CD4-positive, alpha-beta T cell (primary cell): ENCODE measurements at regions of chr5 and their contacts with region 1.

Region 1: DNA sequence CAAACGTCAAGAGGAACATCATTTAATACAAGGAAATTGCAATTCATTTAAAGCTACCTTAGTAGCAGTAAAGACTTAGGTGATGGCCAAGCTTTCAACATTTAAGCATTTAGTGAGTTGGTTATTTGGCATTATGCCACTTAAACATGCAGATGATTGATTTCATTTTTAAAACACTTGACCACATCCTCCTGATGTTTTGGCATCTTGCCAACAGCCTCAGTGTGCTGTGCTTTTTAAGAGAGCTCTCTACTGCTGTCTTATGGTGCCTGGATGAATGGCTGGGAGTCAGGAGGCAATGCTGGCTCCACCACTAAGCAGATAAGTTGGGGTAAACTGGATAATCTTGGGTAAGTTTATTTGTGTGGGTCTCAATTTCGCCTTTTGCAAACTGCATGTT is 364.5 kb downstream of the MAN2A1 start:
- DNase-seq: peak; percentile 35 to 93 (median 72)
- ATAC-seq: peak; percentile 91
- H3K4me3 ChIP-seq: no peak overlapping the region
- H3K4me3 Mint-ChIP-seq: peak overlapping the region; percentile 28
- H3K27ac ChIP-seq: peak overlapping the region in 1 of 2 donors; percentile 43
- H3K27ac Mint-ChIP-seq: peak overlapping the region; percentile 75
- H3K4me1 ChIP-seq: peaks cover 18% of the 10 kb centered on the region
- H3K4me1 Mint-ChIP-seq: peaks cover 41% of the 10 kb centered on the region
- H3K27me3 ChIP-seq: no peaks in the 10 kb centered on the region
- H3K27me3 Mint-ChIP-seq: no peaks in the 10 kb centered on the region
- CTCF ChIP-seq: peak; percentile 56

Region 2: DNA sequence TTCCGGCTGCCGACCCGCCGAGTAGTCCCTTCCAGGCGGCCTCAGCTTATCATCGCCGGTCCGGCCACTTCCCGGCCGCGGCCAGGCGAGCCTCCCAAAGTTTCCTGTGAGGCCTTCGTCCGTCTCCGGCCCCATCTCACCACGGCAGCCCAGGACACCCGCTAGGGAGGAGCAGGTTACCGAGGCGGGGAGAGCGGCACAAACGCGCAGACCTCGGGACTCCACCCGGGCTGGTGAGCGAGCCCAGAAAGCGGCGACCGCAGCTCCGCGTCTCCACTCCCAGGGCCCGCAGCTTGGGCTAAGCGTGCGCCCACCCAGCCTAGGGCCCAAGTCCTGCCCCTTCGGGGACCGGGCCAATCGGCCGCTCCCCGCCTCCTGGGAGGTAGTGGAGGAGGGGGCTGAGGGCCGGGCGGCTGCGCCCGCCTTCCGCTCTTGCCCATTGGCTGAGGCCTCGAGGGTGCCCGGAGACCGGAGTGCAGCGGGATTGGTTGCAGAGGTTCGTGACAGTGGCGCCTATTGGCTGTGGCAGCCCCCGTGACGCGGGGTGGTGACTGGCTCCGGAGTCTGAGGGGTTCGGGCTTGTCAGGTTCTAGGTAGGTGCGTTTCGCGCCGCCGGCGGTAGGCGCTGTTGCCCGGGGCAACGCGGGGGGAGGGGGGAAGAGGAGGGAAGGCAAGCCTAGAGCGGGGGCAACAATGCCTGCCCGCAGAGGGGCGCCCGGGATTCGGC is 1305.7 kb before region 1 on chr5:
- CTCF ChIA-PET with region 1: no interaction called
- POLR2A ChIA-PET with region 1: no interaction called
- intact Hi-C with region 1: loop called in 1 of 2 experiments (anchors 10 kb)
- DNase-seq: peak; percentile 92 to 99 (median 96)
- ATAC-seq: peak; percentile 91
- H3K4me3 ChIP-seq: peak overlapping the region; percentile 98
- H3K4me3 Mint-ChIP-seq: peak overlapping the region; percentile 96
- H3K27ac ChIP-seq: peak overlapping the region; percentile 91 to 92
- H3K27ac Mint-ChIP-seq: peak overlapping the region; percentile 91
- H3K4me1 ChIP-seq: peaks cover 18% of the 10 kb centered on the region
- H3K4me1 Mint-ChIP-seq: peaks cover 21% of the 10 kb centered on the region
- H3K27me3 ChIP-seq: peaks cover 0 to 5% of the 10 kb centered on the region in 2 experiments
- H3K27me3 Mint-ChIP-seq: peaks cover 4% of the 10 kb centered on the region
- CTCF ChIP-seq: no peak

Region 3: GRCh38 chr5:109852371-109853155 is 201.7 kb before region 1 on chr5:
- CTCF ChIA-PET with region 1: interaction called, 3 read pairs
- POLR2A ChIA-PET with region 1: no interaction called
- intact Hi-C with region 1: loop called in 1 of 2 experiments (anchors 5 kb)
- DNase-seq: peak in 2 of 14 experiments; percentile 27 to 38
- ATAC-seq: no peak
- H3K4me3 ChIP-seq: no peak overlapping the region
- H3K4me3 Mint-ChIP-seq: peak overlapping the region; percentile 39
- H3K27ac ChIP-seq: no peak overlapping the region
- H3K27ac Mint-ChIP-seq: peak overlapping the region; percentile 73
- H3K4me1 ChIP-seq: peaks cover 40% of the 10 kb centered on the region
- H3K4me1 Mint-ChIP-seq: peaks cover 82% of the 10 kb centered on the region
- H3K27me3 ChIP-seq: no peaks in the 10 kb centered on the region
- H3K27me3 Mint-ChIP-seq: no peaks in the 10 kb centered on the region
- CTCF ChIP-seq: no peak

Region 4: DNA sequence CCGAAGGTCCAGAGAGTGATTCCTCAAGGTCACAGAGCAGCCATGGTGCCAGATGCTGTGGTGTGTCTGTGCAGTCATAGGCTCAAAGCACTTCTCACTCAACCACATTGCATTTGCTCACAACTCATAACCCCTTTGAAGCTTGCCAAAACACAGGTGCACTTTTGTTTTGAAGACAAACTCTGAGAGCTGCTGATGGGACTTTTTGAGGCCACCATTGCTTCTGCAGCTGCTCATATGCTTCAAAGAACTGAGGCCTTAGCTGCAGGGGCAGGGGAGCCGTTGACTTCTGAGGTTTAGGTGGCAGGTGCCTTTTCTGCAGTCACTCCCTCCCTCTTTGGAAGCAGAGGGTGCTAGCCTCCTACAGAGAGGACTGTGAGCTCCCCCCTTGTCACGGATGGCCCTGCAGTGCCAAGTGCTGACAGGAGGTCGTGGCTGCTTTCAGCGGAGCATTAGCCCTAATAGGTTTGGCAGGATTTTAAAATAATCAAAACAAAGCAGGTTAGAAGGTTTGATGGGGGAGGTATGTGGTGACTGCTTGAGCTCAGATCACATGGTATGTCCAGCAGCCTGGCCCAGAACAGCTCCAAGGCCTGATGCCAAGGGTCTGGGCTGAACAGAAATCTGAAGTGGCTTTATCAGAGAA is 132.4 kb before region 1 on chr5:
- CTCF ChIA-PET with region 1: interaction called, 3 read pairs
- POLR2A ChIA-PET with region 1: interaction called, 32 read pairs
- intact Hi-C with region 1: loop called in 1 of 2 experiments (anchors 5 kb)
- DNase-seq: peak; percentile 38 to 91 (median 68)
- ATAC-seq: peak; percentile 89
- H3K4me3 ChIP-seq: peak overlapping the region; percentile 13
- H3K4me3 Mint-ChIP-seq: peak overlapping the region; percentile 79
- H3K27ac ChIP-seq: peak overlapping the region; percentile 60 to 73
- H3K27ac Mint-ChIP-seq: peak overlapping the region; percentile 94
- H3K4me1 ChIP-seq: peaks cover 36% of the 10 kb centered on the region
- H3K4me1 Mint-ChIP-seq: peaks cover 66% of the 10 kb centered on the region
- H3K27me3 ChIP-seq: no peaks in the 10 kb centered on the region
- H3K27me3 Mint-ChIP-seq: no peaks in the 10 kb centered on the region
- CTCF ChIP-seq: no peak